ENCODE measurements at regions of chr7 and their contacts with region 1.

Region 1: DNA sequence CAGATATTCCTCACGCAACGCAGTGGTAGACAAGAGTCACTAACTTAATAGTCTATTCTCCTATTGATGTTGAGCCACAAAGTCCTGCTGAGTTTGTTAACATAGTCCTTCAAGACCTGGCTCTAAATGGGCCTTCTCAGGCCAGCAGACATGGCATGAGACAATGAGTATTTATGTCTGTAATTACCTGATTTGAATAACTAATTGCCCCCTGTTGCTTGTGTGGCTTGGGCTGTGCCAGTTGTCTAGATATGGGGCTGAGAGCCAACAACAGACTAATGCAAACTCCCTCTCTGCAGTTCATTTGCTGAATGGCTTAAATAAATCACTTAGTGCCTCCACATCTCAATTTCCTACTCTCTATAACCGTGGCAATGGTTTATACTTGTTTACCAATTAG is 65.5 kb upstream of the VWC2 start:
- DNase-seq: no peak
- ATAC-seq: no peak

Region 2: DNA sequence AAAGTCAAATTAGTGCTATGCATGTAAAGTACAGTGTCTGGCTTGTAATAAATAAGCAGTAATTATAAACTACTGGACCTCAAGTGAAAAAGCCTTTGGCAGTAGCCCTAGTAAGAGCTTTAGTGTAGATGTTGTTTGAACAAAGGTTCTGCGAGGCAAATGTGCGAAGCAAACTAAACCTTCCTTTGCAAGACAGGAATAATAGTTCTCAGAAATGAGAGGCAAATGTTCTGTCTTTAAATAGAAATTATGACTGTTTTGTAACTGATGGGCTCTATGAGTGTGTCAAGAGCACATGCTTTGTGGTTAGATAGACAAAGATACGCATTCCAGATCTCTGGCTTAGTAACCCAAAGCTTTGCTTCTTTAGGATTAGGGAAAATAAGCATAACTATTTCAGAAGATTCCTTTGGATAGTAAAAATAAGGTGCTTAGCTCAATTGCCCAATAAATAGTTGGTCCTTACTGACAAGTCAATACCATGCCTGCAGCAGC is 952.8 kb before region 1 on chr7:
- intact Hi-C with region 1: no loop called
- DNase-seq: no peak
- ATAC-seq: no peak

Region 3: GRCh38 chr7:49635800-49636199 is 72.1 kb before region 1 on chr7:
- intact Hi-C with region 1: loop called (anchors 5 kb)
- DNase-seq: no peak
- ATAC-seq: no peak

Region 4: DNA sequence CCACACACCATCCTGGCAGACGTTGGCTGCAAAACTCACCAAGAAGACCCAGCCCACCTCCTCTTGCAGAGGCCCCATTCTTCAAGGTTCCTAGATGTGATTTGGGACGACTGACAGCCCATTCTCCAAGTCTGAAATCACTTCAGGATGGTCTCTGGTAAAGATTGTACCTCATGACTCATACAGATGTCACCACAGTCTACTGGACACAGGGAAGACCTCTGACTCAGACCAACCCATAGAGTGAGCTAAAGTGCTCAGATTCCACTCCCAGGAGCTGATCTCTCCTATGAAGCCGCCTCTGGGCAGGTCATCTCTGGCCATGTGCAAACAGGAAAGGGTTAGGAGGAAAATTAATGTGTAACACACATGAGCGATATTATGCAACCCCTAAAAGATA is 36.9 kb before region 1 on chr7:
- intact Hi-C with region 1: loop called (anchors 5 kb)
- DNase-seq: no peak
- ATAC-seq: no peak

Region 5: DNA sequence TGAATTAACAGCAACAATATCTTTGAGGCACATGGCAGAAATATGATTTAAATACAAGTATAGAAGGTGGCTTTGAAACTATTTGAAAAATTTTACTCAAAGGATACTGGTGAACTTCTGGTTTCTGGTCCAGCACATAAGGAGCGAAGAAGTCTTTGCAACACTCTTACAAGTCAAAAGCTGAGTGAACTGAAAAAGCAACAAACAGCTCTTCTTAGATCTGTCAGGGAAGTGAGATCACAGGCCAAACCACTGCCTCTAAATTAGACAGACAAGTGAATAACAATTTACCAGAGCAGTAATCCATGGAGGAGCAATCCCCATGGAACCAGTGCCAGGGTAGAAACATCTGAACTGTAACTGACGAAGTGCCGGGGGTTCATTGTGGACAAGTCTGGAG is 55.9 kb after region 1 on chr7:
- intact Hi-C with region 1: no loop called
- DNase-seq: no peak
- ATAC-seq: no peak

Region 6: DNA sequence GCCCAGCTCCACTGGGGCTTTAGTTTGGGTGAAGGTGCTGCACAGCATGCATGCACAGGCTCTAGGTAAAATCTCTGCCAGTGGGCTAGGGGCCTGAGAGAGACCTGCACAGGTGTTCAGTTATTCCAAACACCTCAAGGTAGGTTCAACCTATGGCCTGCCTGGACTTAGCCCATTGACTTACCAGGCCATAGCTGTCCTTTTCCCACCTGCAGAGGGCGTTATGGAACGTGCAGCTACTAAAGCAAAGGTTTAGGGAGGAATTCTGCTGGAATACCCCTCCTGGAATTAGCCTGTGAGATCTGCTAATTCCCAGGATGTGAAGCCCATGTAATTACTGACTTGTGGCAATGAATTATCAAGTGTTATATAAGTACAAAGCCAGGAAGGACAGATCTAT is 69.1 kb after region 1 on chr7:
- intact Hi-C with region 1: loop called (anchors 5 kb)
- DNase-seq: no peak
- ATAC-seq: no peak

Measured in Right ventricle myocardium inferior (tissue), 1 donor.